Astrocyte of the cerebellum (primary cell): ENCODE measurements at regions of chr5 and their contacts with region 1.

Region 1: DNA sequence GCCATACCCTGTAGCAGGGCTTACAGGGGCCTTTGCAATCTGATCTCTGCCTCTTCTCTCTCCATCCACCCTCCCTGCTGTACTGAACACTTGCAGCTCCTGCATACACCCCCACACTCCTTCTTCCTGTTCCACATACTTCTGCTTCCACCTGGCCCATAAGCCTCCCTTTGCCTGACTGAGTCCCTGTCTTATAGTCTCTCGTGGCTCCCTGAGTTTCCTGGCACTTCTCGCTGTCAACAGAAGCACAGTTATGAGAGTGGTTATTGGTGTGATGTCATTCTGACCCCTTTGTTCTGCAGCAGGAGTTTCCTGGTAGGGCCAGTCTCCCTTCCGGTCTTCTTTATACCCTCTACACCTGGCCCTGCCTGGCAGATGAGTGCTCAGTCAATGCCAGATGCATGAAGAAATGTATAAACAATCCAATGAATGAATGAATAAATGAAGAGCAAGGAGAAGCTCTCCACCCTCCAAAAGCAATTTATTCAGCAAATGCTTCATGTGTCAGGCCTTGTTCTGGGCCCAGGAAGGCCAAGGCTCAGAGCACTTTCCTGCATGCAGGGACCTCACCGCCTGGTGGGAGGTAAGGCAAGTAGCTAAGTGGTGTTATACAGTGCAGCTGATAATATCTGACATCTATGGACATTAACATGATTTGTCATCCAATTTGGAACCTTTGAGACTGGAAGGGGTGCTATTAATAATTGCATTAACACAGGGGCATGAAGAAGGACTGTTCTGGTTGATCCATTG is 20.5 kb upstream of the CSF1R start:
- DNase-seq: no peak
- H3K4me3 ChIP-seq: no peak overlapping the region
- CTCF ChIP-seq: no peak

Region 2: DNA sequence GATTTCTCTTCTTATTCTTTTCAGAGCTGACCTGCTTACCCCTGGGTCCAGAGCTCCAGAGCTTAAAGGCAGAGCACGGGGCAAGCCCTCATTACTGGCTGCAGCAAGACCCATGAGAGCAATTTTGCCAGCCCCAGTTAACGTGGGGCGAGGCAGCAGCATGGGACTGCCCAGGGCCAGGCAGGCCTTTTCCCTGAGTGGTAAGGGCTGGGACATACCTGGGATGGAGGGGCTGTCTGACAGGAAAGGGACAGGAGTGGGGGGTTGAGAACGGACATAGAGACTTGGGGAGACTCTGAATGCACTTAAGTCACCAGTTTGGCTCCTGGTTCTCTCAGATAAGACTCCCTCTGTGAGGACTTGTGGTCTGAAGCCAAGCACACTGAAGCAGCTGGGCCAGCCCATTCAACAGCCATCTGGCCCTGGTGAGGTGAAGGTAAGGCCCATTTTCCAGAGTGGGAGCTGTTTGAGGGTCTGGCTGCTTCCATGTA is 80.1 kb before region 1 on chr5:
- in situ Hi-C with region 1: loop called (anchors 5 kb)
- DNase-seq: no peak
- H3K4me3 ChIP-seq: no peak overlapping the region
- CTCF ChIP-seq: no peak

Region 3: GRCh38 chr5:150073086-150073625 is 33.7 kb before region 1 on chr5:
- in situ Hi-C with region 1: loop called (anchors 5 kb)
- DNase-seq: no peak
- H3K4me3 ChIP-seq: no peak overlapping the region
- CTCF ChIP-seq: no peak